IMR-90 (cell line): ENCODE measurements at regions of chr15 and their contacts with region 1.

Region 1: DNA sequence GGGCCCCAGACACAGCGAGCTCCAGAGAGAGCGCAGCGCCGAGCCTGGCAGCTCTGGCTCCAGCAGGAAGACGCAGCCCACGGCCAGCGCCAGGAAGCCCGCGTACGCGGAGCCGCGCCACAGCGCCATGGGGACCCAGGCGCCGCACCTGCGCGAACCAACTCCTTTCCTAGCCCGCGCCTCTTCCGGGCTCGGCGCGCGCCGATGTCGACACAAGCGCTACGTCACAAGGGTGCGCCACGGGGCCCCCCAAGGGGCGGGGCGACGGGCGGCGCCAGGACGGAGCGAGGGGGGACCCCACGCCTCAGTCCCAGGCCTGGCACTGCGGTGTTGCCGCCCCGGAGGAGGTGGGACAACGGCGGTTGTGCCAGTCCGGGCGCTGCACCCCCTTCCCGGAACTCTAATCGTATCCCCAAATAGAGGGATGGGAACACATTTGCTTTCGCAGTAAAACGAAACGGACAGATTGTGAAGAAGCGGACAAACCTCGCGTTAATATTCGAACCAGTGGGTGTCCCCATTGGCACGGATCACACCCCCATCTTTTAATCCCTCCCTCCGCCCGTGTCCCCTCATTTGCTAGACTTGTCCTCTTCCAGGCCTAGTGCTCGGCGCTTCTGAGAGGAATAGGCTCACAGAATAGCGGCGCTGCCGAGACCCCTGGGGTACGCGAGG is at the start of gene ADPGK:
- DNase-seq: peak; percentile 88
- ATAC-seq: peak; percentile 92
- H3K4me3 ChIP-seq: peak within 1 kb of the TSS; percentile 79
- H3K27ac ChIP-seq: peak within 1 kb of the TSS; percentile 90
- H3K4me1 ChIP-seq: peaks cover 16% of the 10 kb centered on the region
- H3K27me3 ChIP-seq: no peaks in the 10 kb centered on the region
- CTCF ChIP-seq: no peak
- POLR2A ChIP-seq: peak; percentile 86
- RAD21 ChIP-seq: no peak
- total RNA-seq, gene ADPGK: 48.0 and 53.2 TPM in 2 replicates

Region 2: DNA sequence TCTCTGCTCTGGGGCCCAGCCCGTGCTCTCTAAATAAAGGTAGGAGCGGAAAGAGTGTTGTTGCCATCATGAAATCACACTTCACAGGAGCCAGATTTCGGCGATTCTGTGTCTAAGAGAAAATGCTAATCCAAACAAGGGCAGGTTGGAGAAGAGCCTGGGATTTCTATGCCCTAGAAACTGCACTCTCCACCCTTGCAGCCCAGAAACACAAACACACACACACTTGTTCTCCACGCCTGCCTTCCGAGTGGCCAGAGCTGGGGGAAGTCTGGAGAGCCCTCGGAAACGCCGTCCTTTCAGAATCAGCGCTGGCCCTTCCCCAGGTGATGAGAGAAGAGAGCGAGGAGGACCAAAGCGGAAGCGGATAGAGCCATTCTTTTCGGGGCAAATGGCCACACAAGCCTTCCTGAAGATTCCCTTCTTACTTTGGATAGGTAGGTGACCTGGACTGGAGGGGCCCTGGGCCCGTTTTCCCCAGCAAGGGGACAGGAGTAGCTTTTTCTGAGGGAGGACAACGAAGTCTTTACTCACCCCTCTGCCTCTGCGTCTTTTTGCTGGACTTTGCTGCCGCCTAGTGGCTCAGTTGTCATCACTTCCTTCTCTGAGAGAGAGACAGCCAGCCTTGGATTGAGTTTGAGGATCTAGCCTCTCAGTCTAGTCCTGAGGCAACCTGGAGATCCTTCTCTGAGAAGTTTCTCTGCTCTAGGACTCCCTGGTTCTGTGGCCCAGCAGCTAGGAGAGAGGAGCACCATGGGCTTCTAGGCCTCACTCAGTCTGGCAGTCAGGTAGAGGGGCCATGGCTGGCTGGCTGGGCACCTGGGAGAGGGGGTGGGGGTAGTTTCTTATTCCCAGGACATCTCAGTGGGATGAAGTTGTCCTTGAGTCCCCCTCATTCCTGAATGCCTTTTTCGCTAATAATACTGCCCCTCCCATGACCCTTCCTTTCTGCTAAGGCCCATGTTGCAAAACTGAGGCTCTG is 627.8 kb before region 1 on chr15:
- CTCF ChIA-PET with region 1: no interaction called
- POLR2A ChIA-PET with region 1: no interaction called
- dilution Hi-C with region 1: no loop called
- in situ Hi-C with region 1: no loop called
- intact Hi-C with region 1: no loop called
- DNase-seq: peak; percentile 74
- ATAC-seq: peak; percentile 96
- H3K4me3 ChIP-seq: peak overlapping the region; percentile 40
- H3K27ac ChIP-seq: no peak overlapping the region
- H3K4me1 ChIP-seq: peaks cover 8% of the 10 kb centered on the region; the same call in 1 of the 2 replicates
- H3K27me3 ChIP-seq: no peaks in the 10 kb centered on the region
- CTCF ChIP-seq: peak; percentile 90
- POLR2A ChIP-seq: peak; percentile 41; the same call in 1 of the 2 replicates
- RAD21 ChIP-seq: peak; percentile 95

Region 3: DNA sequence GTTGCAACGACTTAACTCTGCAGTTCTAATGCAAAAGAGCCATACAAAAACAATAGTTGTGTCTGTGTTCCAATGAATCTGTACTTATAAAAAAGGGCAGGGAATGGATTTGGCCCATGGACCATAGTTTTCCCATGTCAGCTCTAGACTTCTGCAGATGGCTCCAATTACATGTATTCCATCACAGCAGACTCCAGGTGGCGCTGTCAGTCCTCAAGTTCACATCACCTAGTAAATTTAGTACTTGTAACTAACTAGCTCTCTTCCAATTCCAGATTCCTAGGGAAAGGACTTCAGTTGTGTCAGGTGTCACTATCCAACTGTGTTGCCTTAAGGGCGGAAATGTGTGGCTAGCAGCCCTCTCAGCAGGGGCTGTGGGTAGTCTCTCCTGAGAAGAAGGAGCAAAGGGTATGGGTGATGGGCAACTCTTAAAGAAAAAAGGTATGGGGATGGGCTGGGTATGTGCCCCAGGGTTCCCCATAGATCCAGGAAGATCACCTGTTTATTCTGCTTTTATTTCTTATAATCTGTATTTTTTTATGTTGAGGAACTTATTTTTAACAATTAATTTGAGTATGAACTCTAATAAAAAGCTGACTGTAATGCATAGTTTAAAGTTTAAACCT is 61.5 kb before region 1 on chr15:
- CTCF ChIA-PET with region 1: interaction called, 3 read pairs
- POLR2A ChIA-PET with region 1: no interaction called
- dilution Hi-C with region 1: no loop called
- in situ Hi-C with region 1: no loop called
- intact Hi-C with region 1: loop called (anchors 2 kb)
- DNase-seq: peak; percentile 80
- ATAC-seq: peak; percentile 87
- H3K4me3 ChIP-seq: no peak overlapping the region
- H3K27ac ChIP-seq: no peak overlapping the region
- H3K4me1 ChIP-seq: no peaks in the 10 kb centered on the region
- H3K27me3 ChIP-seq: no peaks in the 10 kb centered on the region
- CTCF ChIP-seq: peak; percentile 87
- POLR2A ChIP-seq: no peak
- RAD21 ChIP-seq: peak; percentile 78

Region 4: GRCh38 chr15:73051811-73052678 is 268.3 kb after region 1 on chr15 and contains the start of gene NEO1:
- CTCF ChIA-PET with region 1: no interaction called
- POLR2A ChIA-PET with region 1: interaction called, 13 read pairs
- dilution Hi-C with region 1: no loop called
- in situ Hi-C with region 1: no loop called
- intact Hi-C with region 1: no loop called
- DNase-seq: peak; percentile 70
- ATAC-seq: peak; percentile 93
- H3K4me3 ChIP-seq: peak within 1 kb of the TSS; percentile 90
- H3K27ac ChIP-seq: peak within 1 kb of the TSS; percentile 91
- H3K4me1 ChIP-seq: peaks cover 2% of the 10 kb centered on the region; the same call in 1 of the 2 replicates
- H3K27me3 ChIP-seq: peaks cover 10% of the 10 kb centered on the region
- CTCF ChIP-seq: no peak
- POLR2A ChIP-seq: no peak
- RAD21 ChIP-seq: no peak
- total RNA-seq, gene NEO1: 16.3 and 18.3 TPM in 2 replicates

Region 5: DNA sequence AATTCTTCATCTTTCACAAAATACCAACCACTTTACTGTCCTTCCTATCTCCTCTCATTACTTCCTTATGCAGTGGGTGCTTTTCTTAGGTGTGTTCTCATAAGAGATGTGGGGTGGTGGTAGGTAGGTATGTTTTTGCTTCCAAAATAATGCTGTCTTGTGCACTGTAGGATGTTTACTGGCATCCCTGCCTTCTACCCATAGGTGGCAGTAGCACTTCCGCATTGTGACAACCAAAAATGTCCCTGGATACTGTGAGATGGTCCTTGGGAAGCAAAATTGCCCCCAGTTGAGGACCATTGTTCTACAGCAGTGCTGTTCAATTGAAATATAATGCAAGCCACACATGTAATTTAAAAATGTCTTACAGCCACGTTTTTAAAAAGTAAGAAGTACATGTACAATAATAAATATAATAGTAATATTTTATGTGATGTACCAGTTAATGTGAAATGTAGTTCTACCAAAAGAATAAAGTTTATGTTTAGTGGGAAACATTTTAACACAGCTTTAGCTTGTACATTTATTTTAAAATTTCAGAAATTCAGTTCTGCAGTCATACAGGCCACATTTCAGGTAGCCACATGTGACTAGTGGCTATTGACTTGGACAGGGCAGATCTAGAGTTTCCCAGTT is 343.7 kb after region 1 on chr15:
- CTCF ChIA-PET with region 1: no interaction called
- POLR2A ChIA-PET with region 1: interaction called, 11 read pairs
- dilution Hi-C with region 1: no loop called
- in situ Hi-C with region 1: no loop called
- intact Hi-C with region 1: no loop called
- DNase-seq: peak; percentile 30
- ATAC-seq: peak; percentile 89
- H3K4me3 ChIP-seq: no peak overlapping the region
- H3K27ac ChIP-seq: no peak overlapping the region
- H3K4me1 ChIP-seq: no peaks in the 10 kb centered on the region
- H3K27me3 ChIP-seq: no peaks in the 10 kb centered on the region
- CTCF ChIP-seq: peak; percentile 67
- POLR2A ChIP-seq: no peak
- RAD21 ChIP-seq: peak; percentile 43

Region 6: GRCh38 chr15:73231661-73232419 is 448.1 kb after region 1 on chr15:
- CTCF ChIA-PET with region 1: no interaction called
- POLR2A ChIA-PET with region 1: no interaction called
- dilution Hi-C with region 1: no loop called
- in situ Hi-C with region 1: no loop called
- intact Hi-C with region 1: loop called (anchors 2 kb)
- DNase-seq: peak; percentile 76
- ATAC-seq: peak; percentile 85
- H3K4me3 ChIP-seq: no peak overlapping the region
- H3K27ac ChIP-seq: peak overlapping the region; percentile 83
- H3K4me1 ChIP-seq: peaks cover 17% of the 10 kb centered on the region
- H3K27me3 ChIP-seq: no peaks in the 10 kb centered on the region
- CTCF ChIP-seq: no peak
- POLR2A ChIP-seq: no peak
- RAD21 ChIP-seq: no peak

Region 7: GRCh38 chr15:73240866-73241499 is 457.3 kb after region 1 on chr15:
- CTCF ChIA-PET with region 1: no interaction called
- POLR2A ChIA-PET with region 1: no interaction called
- dilution Hi-C with region 1: no loop called
- in situ Hi-C with region 1: no loop called
- intact Hi-C with region 1: loop called (anchors 2 kb)
- DNase-seq: peak; percentile 67
- ATAC-seq: peak; percentile 61
- H3K4me3 ChIP-seq: no peak overlapping the region
- H3K27ac ChIP-seq: no peak overlapping the region
- H3K4me1 ChIP-seq: peaks cover 3% of the 10 kb centered on the region
- H3K27me3 ChIP-seq: no peaks in the 10 kb centered on the region
- CTCF ChIP-seq: peak; percentile 82
- POLR2A ChIP-seq: no peak
- RAD21 ChIP-seq: peak; percentile 76

Region 8: GRCh38 chr15:73273181-73274002 is 489.7 kb after region 1 on chr15:
- CTCF ChIA-PET with region 1: no interaction called
- POLR2A ChIA-PET with region 1: no interaction called
- dilution Hi-C with region 1: no loop called
- in situ Hi-C with region 1: loop called (anchors 10 kb)
- intact Hi-C with region 1: loop called (anchors 1 kb)
- DNase-seq: peak; percentile 67
- ATAC-seq: peak; percentile 95
- H3K4me3 ChIP-seq: no peak overlapping the region
- H3K27ac ChIP-seq: no peak overlapping the region
- H3K4me1 ChIP-seq: peaks cover 7% of the 10 kb centered on the region
- H3K27me3 ChIP-seq: no peaks in the 10 kb centered on the region
- CTCF ChIP-seq: peak; percentile 83
- POLR2A ChIP-seq: no peak
- RAD21 ChIP-seq: peak; percentile 76